Mammary epithelial cell (primary cell): ENCODE measurements at regions of chr19 and their contacts with region 1.

Region 1: GRCh38 chr19:43080186-43080585 is 2.3 kb downstream of the PSG2 start:
- DNase-seq: no peak
- H3K4me3 ChIP-seq: no peak overlapping the region
- H3K27ac ChIP-seq: no peak overlapping the region
- H3K4me1 ChIP-seq: peaks cover 23% of the 10 kb centered on the region
- H3K27me3 ChIP-seq: no peaks in the 10 kb centered on the region
- CTCF ChIP-seq: no peak

Region 2: DNA sequence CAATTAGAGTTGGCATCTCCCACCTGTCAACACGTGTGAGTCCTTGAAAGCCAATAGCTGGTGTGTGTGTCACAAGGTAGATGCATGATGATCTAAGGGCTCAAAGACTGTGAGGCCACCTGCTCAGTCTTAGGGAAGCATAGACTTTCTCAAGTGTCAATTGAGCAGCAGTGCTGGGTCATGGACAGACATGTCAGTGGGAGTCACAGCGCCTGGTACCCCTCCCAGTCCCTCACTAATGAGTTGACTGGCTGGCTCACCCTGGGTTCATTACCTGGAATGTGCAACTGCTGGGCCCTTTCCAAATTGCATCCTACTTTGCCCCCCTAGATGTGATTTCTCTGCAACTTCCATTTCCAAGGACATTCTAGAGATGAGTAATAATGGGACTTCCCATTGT is 153.4 kb before region 1 on chr19:
- CTCF ChIA-PET with region 1: no interaction called
- dilution Hi-C with region 1: no loop called
- in situ Hi-C with region 1: loop called (anchors 5 to 10 kb)
- intact Hi-C with region 1: no loop called
- DNase-seq: no peak
- H3K4me3 ChIP-seq: no peak overlapping the region
- H3K27ac ChIP-seq: no peak overlapping the region
- H3K4me1 ChIP-seq: peaks cover 8% of the 10 kb centered on the region
- H3K27me3 ChIP-seq: no peaks in the 10 kb centered on the region
- CTCF ChIP-seq: no peak

Region 3: GRCh38 chr19:43105496-43105895 is 25.3 kb after region 1 on chr19:
- CTCF ChIA-PET with region 1: no interaction called
- dilution Hi-C with region 1: no loop called
- in situ Hi-C with region 1: no loop called
- intact Hi-C with region 1: no loop called
- DNase-seq: no peak
- H3K4me3 ChIP-seq: no peak overlapping the region
- H3K27ac ChIP-seq: no peak overlapping the region
- H3K4me1 ChIP-seq: no peaks in the 10 kb centered on the region
- H3K27me3 ChIP-seq: no peaks in the 10 kb centered on the region
- CTCF ChIP-seq: no peak

Region 4: GRCh38 chr19:43207991-43208390 is 127.8 kb after region 1 on chr19:
- CTCF ChIA-PET with region 1: no interaction called
- dilution Hi-C with region 1: no loop called
- in situ Hi-C with region 1: no loop called
- intact Hi-C with region 1: no loop called
- DNase-seq: no peak
- H3K4me3 ChIP-seq: no peak overlapping the region
- H3K27ac ChIP-seq: no peak overlapping the region
- H3K4me1 ChIP-seq: peaks cover 14% of the 10 kb centered on the region
- H3K27me3 ChIP-seq: no peaks in the 10 kb centered on the region
- CTCF ChIP-seq: no peak